ENCODE measurements at regions of chr22 and their contacts with region 1.

Region 1: GRCh38 chr22:32416556-32417085 is 4.6 kb upstream of the RTCB start:
- DNase-seq: no peak
- H3K4me3 ChIP-seq: no peak overlapping the region
- H3K27ac ChIP-seq: no peak overlapping the region
- H3K4me1 ChIP-seq: no peaks in the 10 kb centered on the region
- H3K27me3 ChIP-seq: no peaks in the 10 kb centered on the region
- CTCF ChIP-seq: no peak
- POLR2A ChIP-seq: no peak

Region 2: GRCh38 chr22:32469797-32470212 is 53.2 kb after region 1 on chr22:
- intact Hi-C with region 1: loop called in 1 of 2 experiments (anchors 5 kb)
- DNase-seq: peak; percentile 59 to 91 (median 76)
- H3K4me3 ChIP-seq: no peak overlapping the region
- H3K27ac ChIP-seq: peak overlapping the region in 2 of 5 donors; percentile 18 to 75
- H3K4me1 ChIP-seq: peaks cover 5 to 8% of the 10 kb centered on the region in 2 donors
- H3K27me3 ChIP-seq: peaks cover 8% of the 10 kb centered on the region
- CTCF ChIP-seq: no peak
- POLR2A ChIP-seq: peak in 1 of 2 donors; percentile 25